Naive thymus-derived CD4-positive, alpha-beta T cell (primary cell): ENCODE measurements at regions of chr3 and their contacts with region 1.

Region 1: GRCh38 chr3:170961616-170962400 is 53.4 kb upstream of the EIF5A2 start:
- DNase-seq: peak in 5 of 9 donors; percentile 4 to 20 (median 14)
- ATAC-seq: no peak
- H3K4me3 ChIP-seq: no peak overlapping the region
- H3K4me3 Mint-ChIP-seq: no peak overlapping the region
- H3K27ac ChIP-seq: no peak overlapping the region
- H3K27ac Mint-ChIP-seq: peak overlapping the region in 1 of 9 donors; percentile 23
- H3K4me1 ChIP-seq: no peaks in the 10 kb centered on the region
- H3K4me1 Mint-ChIP-seq: no peaks in the 10 kb centered on the region
- H3K27me3 ChIP-seq: no peaks in the 10 kb centered on the region
- H3K27me3 Mint-ChIP-seq: peaks cover 0 to 23% (median 19%) of the 10 kb centered on the region in 5 donors

Region 2: DNA sequence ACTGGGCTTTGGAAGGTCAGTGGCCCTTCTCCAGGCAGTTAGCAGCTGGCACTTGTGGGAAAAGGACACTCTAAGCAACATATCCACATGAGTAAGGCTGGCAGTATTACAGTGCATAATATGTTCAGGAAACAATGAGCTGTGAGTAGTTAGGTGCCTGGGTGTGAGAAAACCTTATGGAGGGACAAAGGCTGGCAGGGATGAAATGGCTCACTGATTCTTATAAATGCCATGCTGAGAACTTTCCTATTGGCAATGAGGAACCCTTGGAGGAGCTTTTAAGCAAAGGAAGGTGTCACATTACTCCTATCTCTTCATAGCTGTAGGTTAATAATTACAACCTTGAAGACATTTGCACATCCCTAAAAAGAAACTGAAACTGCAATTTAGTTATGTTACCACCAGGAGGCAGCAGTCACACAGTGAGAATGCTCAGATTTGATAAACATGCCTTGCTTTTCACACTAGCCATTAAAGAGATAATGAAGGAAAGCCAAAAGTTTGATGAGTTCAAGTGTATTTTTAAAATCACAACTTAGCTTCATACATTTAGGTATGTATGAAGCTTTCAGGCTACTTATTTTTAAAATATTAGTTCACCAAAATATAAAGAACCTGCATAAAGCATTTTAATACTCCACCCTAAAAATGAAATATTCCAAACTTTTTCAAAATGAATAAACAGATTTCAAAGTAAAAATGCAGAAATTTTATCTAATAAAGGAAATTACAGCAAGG is 201.3 kb after region 1 on chr3:
- CTCF ChIA-PET with region 1: no interaction called
- POLR2A ChIA-PET with region 1: no interaction called
- intact Hi-C with region 1: loop called in 1 of 2 experiments (anchors 10 kb)
- DNase-seq: peak in 7 of 9 donors; percentile 19 to 51 (median 47)
- ATAC-seq: peak; percentile 55
- H3K4me3 ChIP-seq: no peak overlapping the region
- H3K4me3 Mint-ChIP-seq: no peak overlapping the region
- H3K27ac ChIP-seq: no peak overlapping the region
- H3K27ac Mint-ChIP-seq: peak overlapping the region in 1 of 9 donors; percentile 56
- H3K4me1 ChIP-seq: no peaks in the 10 kb centered on the region
- H3K4me1 Mint-ChIP-seq: peaks cover 9 to 25% (median 19%) of the 10 kb centered on the region in 7 donors
- H3K27me3 ChIP-seq: no peaks in the 10 kb centered on the region
- H3K27me3 Mint-ChIP-seq: no peaks in the 10 kb centered on the region

Region 3: DNA sequence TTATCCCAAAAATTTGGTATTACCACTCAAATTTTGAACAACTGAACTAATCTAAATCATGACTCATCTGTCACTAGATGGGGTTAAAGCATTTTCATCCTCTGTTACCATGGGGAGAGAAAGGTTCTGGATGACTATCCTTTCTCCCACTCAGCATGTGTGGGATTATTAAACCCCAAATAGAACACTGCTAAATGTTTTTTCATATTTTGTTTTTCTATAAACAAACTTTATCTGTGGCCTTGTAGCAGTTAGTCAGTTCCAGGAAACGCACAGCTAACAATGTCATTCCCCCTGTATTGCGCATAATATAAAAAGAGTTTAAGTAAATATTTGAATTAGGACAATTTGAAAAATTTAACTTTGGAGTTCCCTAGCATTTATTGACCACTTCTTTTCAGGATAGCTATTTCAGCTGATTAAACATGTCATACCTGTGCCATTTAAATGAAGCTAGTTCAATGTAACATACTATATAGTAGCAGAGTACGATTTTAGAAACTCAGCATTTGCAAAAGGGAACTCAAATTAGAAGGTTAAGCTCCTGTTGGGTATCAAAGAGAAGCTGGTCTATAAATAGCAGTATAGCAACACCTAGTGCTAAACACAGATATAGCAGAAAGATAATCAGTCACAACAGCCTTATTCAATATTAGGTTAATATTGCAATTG is 872.1 kb after region 1 on chr3:
- CTCF ChIA-PET with region 1: no interaction called
- POLR2A ChIA-PET with region 1: no interaction called
- intact Hi-C with region 1: loop called in 1 of 2 experiments (anchors 1 kb)
- DNase-seq: no peak
- ATAC-seq: peak; percentile 47
- H3K4me3 ChIP-seq: no peak overlapping the region
- H3K4me3 Mint-ChIP-seq: no peak overlapping the region
- H3K27ac ChIP-seq: no peak overlapping the region
- H3K27ac Mint-ChIP-seq: no peak overlapping the region
- H3K4me1 ChIP-seq: no peaks in the 10 kb centered on the region
- H3K4me1 Mint-ChIP-seq: peaks cover 0 to 6% (median 0%) of the 10 kb centered on the region in 7 donors
- H3K27me3 ChIP-seq: no peaks in the 10 kb centered on the region
- H3K27me3 Mint-ChIP-seq: peaks cover 4 to 34% (median 14%) of the 10 kb centered on the region in 5 donors

Region 4: DNA sequence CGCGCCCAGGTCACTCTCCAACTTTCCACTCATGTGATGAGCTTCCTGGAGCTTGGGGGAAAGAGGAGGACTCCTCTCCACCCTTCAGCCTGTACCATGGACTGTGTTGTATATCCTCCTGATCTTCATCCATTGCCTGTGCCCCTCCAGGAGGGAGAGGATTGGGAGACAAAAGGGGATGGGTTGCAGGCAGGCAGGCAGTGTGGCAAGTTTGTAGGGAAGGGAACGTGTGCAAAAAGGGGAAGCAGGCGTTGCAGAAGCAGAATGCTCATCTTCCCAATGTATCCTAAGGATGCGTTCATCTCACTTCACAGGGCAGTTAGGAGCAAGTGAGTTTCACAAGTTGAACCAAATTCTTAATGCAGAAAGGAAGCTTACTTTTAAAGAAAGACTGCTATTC is 1514.5 kb after region 1 on chr3:
- CTCF ChIA-PET with region 1: no interaction called
- POLR2A ChIA-PET with region 1: no interaction called
- intact Hi-C with region 1: loop called in 1 of 2 experiments (anchors 5 kb)
- DNase-seq: no peak
- ATAC-seq: no peak
- H3K4me3 ChIP-seq: peak overlapping the region; percentile 61
- H3K4me3 Mint-ChIP-seq: peak overlapping the region; percentile 27 to 95 (median 90)
- H3K27ac ChIP-seq: no peak overlapping the region
- H3K27ac Mint-ChIP-seq: no peak overlapping the region
- H3K4me1 ChIP-seq: no peaks in the 10 kb centered on the region
- H3K4me1 Mint-ChIP-seq: peaks cover 5 to 18% (median 12%) of the 10 kb centered on the region in 7 donors
- H3K27me3 ChIP-seq: no peaks in the 10 kb centered on the region
- H3K27me3 Mint-ChIP-seq: peaks cover 0 to 10% (median 4%) of the 10 kb centered on the region in 5 donors